ENCODE measurements at regions of chr5 and their contacts with region 1.

Region 1: GRCh38 chr5:80204808-80205614 is 50.8 kb downstream of the SERINC5 start:
- DNase-seq: peak; percentile 70 to 92 (median 84)
- H3K4me3 ChIP-seq: peak overlapping the region in 1 of 7 experiments; percentile 49
- H3K27ac ChIP-seq: no peak overlapping the region
- H3K4me1 ChIP-seq: peaks cover 0 to 27% (median 21%) of the 10 kb centered on the region in 4 experiments
- H3K27me3 ChIP-seq: no peaks in the 10 kb centered on the region

Region 2: DNA sequence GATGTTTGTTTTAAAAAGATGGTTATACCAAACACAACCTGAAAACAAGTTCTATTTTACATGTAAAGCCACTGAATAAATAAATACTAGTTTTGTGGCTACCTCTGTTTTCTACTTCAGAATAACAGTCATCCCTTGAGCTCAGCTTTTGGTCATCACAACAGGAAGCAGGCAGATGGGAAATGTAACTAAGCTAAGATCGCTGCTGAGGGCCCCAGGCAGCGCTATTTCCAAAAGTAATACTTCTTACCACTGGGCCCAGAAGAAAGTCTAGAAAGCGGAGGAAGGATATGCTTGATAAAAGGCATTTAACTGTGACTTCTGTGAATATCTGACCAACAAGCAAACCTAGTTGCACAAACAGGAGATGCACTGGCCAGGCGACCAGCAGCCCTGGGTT is 10.5 kb before region 1 on chr5:
- CTCF ChIA-PET with region 1: interaction called, 14 read pairs
- POLR2A ChIA-PET with region 1: no interaction called
- DNase-seq: peak in 1 of 3 donors; percentile 29
- H3K4me3 ChIP-seq: peak overlapping the region in 2 of 7 experiments; percentile 0 to 6
- H3K27ac ChIP-seq: no peak overlapping the region
- H3K4me1 ChIP-seq: peaks cover 26 to 46% (median 33%) of the 10 kb centered on the region in 4 experiments
- H3K27me3 ChIP-seq: no peaks in the 10 kb centered on the region